Activated T-helper 2 cell treated with anti-CD3 and anti-CD28 coated beads, Interferon-gamma antibody, Interleukin-2, Interleukin-4, amounts not matched to agents 10 μg/mL and 5 μg/mL and 100 μg/mL, durations not matched to agents 14 hours and 24 hours and 36 hours (primary cell): ENCODE measurements at regions of chr10 and their contacts with region 1.

Region 1: GRCh38 chr10:50508315-50509051 is 115.3 kb downstream of the SGMS1 start:
- DNase-seq: peak; percentile 50
- H3K4me3 Mint-ChIP-seq: no peak overlapping the region
- H3K27ac Mint-ChIP-seq: peak overlapping the region; percentile 10
- H3K4me1 Mint-ChIP-seq: peaks cover 89% of the 10 kb centered on the region
- H3K27me3 Mint-ChIP-seq: peaks cover 5% of the 10 kb centered on the region

Region 2: DNA sequence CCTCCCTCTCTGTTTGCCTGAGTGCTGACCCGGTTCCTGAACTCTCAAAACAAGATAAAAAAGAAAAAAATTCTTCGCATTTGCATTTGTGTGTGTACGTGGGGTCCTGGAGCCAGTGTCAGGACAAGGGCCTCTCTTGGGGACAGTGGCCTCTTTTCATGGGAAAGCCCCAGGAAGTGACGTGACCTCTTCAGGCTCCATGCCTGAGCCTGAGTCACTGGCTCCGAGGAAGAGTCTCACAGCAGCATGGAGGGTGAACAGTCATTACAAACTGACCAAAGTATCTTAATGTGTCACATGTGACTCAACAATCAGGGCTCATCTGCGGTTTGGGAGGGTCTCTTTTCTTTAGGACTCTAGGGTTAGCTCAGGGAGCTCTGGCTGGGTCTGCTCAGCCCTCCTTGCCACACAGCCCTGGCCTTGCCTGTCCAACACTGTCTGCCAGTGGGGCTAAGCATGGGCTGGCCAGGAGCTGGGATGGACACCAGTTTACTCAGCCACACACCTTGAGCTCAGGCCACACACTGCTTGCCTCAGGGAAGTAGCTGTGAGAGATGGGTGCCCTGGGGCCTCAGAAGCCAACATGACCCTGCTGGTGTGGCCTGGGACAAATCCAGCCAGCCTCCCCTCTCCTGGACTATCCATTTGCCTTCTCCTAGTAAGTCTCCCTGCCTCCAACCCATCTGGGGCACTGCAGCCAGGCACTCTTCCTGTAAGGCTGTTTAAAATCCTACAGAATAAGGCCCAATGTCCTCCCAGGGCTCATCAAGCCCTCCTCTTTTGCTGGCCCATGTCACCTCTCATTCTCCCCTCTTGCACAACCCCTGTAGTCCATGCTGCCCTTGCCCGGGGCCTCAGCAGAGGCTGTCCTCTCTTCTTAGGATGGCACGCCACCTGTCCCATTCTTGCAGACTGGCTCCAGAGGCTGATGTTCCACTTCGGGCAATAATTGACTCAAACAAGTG is 1330.8 kb before region 1 on chr10:
- intact Hi-C with region 1: loop called (anchors 5 kb)
- DNase-seq: peak; percentile 71
- H3K4me3 Mint-ChIP-seq: peak overlapping the region; percentile 67
- H3K27ac Mint-ChIP-seq: peak overlapping the region; percentile 97
- H3K4me1 Mint-ChIP-seq: peaks cover 79% of the 10 kb centered on the region
- H3K27me3 Mint-ChIP-seq: no peaks in the 10 kb centered on the region

Region 3: DNA sequence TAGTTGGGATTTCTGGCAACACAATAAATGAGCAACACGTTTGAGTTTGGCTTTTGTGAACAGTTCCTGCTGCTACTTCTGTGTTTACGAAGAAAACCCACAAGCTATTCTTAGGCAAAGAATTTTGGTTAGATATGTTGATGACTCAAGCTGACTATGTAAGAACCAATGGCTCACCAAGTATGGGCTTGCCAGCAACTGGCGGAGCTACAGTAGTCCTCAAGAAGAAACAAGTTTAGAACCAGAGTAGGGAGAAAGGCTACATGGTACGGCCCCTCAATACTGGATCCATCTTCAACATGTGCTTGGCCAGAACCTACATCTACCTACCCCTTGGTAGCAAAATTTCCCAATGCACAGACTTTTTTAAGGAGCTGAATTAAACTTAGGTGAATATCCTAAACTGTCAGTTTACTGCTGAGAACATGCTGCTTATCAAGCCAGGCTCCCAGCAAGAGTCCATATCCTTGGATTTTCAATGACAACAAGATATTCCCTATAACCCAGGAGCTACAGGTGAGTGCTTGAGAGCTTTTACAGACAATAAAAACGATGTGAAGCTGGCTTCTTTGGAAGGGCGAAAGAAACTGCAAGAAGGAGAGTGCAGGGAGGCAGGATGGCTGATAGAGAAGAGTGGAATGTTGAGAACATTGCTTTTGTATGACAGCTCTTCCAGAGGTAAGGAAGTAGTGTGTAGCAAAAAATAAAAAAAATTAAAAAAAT is 182.9 kb before region 1 on chr10:
- intact Hi-C with region 1: loop called (anchors 2 kb)
- DNase-seq: peak; percentile 23
- H3K4me3 Mint-ChIP-seq: peak overlapping the region; percentile 60
- H3K27ac Mint-ChIP-seq: no peak overlapping the region
- H3K4me1 Mint-ChIP-seq: peaks cover 79% of the 10 kb centered on the region
- H3K27me3 Mint-ChIP-seq: no peaks in the 10 kb centered on the region

Region 4: DNA sequence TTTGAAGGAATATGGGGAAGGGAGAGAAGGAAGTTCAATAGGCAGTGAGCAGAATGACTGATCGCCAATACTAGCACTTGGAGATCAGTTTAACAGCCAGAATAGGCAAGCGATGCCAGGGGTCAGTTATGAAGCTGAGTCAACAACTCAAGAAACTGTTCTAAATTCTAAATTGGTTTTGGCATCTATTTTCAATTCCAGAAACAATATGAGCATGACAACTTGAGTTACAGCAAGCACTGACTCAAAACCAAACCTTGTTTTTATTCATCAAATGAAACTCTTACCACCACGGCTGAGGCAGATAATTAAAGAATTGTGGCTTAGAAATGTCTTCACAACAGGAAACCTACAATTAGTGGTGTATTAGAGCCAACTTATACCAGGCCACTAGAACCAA is 76.7 kb before region 1 on chr10:
- intact Hi-C with region 1: loop called (anchors 1 kb)
- DNase-seq: no peak
- H3K4me3 Mint-ChIP-seq: peak overlapping the region; percentile 37
- H3K27ac Mint-ChIP-seq: peak overlapping the region; percentile 76
- H3K4me1 Mint-ChIP-seq: peaks cover 34% of the 10 kb centered on the region
- H3K27me3 Mint-ChIP-seq: peaks cover 8% of the 10 kb centered on the region

Region 5: GRCh38 chr10:50490241-50490640 is 18.2 kb before region 1 on chr10:
- intact Hi-C with region 1: no loop called
- DNase-seq: no peak
- H3K4me3 Mint-ChIP-seq: no peak overlapping the region
- H3K27ac Mint-ChIP-seq: no peak overlapping the region
- H3K4me1 Mint-ChIP-seq: peaks cover 5% of the 10 kb centered on the region
- H3K27me3 Mint-ChIP-seq: no peaks in the 10 kb centered on the region

Region 6: GRCh38 chr10:50527442-50528043 is 19.1 kb after region 1 on chr10:
- intact Hi-C with region 1: loop called (anchors 1 kb)
- DNase-seq: no peak
- H3K4me3 Mint-ChIP-seq: no peak overlapping the region
- H3K27ac Mint-ChIP-seq: no peak overlapping the region
- H3K4me1 Mint-ChIP-seq: peaks cover 14% of the 10 kb centered on the region
- H3K27me3 Mint-ChIP-seq: peaks cover 2% of the 10 kb centered on the region

Region 7: GRCh38 chr10:50593523-50594376 is 85.3 kb after region 1 on chr10:
- intact Hi-C with region 1: no loop called
- DNase-seq: no peak
- H3K4me3 Mint-ChIP-seq: no peak overlapping the region
- H3K27ac Mint-ChIP-seq: no peak overlapping the region
- H3K4me1 Mint-ChIP-seq: peaks cover 2% of the 10 kb centered on the region
- H3K27me3 Mint-ChIP-seq: no peaks in the 10 kb centered on the region

Region 8: DNA sequence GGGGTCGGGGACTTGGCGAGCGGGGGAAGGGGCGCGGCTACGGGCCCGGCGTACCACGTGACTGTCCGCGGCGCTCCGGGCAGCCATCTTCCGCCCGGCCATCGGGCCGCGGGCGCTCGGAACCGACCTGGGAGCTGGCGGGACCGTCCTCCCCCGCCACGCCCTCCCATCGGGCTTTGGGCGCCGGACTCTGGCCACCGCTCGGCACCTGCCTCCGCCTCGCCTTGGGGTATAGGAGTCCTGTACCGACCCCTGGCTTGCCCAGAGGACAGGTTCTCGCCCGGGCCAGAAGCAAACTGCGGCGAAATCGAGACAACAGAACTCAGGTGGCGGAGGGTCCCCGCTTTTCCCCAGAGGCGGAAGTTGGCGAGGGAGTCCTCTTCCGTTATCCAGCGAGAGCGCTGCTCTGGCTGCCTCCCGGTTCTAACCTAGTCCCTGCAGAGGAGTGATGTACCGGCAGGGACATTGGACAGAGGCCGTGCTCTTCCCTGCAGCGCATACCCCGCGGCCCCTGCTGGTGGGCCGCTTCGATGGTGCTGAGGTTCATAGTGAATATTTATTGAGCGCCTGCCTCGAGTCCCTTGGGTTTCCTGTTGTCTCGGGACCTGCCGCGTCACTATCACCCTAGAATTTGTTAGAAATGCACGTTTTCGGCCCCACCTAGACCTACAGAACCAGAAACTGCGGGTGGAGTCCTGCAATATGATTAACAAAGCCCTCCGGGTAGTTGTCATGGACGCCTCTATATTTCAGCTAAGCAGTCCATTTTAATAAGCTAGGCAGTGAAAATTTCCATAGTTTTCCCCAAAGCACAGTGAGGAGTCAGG is 116.6 kb after region 1 on chr10:
- intact Hi-C with region 1: loop called (anchors 1 kb)
- DNase-seq: peak; percentile 50
- H3K4me3 Mint-ChIP-seq: peak overlapping the region; percentile 83
- H3K27ac Mint-ChIP-seq: peak overlapping the region; percentile 77
- H3K4me1 Mint-ChIP-seq: peaks cover 36% of the 10 kb centered on the region
- H3K27me3 Mint-ChIP-seq: peaks cover 25% of the 10 kb centered on the region